ENCODE measurements at regions of chr15 and their contacts with region 1.

Region 1: DNA sequence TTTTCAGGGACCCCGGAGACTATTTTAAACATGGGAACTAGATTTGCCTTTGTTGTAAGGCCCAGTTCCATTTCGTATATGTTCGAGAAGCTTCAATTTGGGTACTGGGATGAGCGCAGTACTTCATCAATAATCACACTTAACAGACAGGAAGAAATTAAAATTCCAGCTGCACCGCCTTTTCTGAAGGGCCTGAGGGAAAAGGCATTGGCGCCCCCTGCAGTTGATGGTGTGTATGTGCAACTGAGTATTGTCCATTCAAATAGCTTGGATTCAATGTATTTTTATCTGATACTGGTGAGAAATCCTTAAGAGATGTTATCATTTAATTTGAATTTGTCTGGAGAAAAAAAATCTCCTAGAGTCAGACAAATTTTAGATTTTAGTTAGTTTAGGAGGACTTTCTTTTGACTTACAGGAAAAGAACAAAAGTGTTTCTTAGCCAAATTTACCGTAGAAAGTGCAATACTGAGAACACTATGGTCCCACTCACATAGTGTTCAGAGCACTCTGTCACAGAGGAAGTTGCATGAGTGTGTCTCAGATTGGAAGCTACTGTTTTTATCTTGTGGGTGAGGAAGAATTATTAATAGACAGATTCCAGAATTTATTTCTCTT is 5.4 kb upstream of the ALDH1A2 start:
- DNase-seq: no peak
- H3K4me3 ChIP-seq: no peak overlapping the region
- H3K27ac ChIP-seq: no peak overlapping the region
- H3K27me3 ChIP-seq: peaks cover 16% of the 10 kb centered on the region
- CTCF ChIP-seq: peak; percentile 86

Region 2: GRCh38 chr15:57561041-57561711 is 509.7 kb before region 1 on chr15:
- CTCF ChIA-PET with region 1: interaction called, 13 read pairs
- POLR2A ChIA-PET with region 1: no interaction called
- DNase-seq: peak; percentile 26
- H3K4me3 ChIP-seq: no peak overlapping the region
- H3K27ac ChIP-seq: no peak overlapping the region
- H3K27me3 ChIP-seq: peaks cover 12% of the 10 kb centered on the region
- CTCF ChIP-seq: peak; percentile 94

Region 3: DNA sequence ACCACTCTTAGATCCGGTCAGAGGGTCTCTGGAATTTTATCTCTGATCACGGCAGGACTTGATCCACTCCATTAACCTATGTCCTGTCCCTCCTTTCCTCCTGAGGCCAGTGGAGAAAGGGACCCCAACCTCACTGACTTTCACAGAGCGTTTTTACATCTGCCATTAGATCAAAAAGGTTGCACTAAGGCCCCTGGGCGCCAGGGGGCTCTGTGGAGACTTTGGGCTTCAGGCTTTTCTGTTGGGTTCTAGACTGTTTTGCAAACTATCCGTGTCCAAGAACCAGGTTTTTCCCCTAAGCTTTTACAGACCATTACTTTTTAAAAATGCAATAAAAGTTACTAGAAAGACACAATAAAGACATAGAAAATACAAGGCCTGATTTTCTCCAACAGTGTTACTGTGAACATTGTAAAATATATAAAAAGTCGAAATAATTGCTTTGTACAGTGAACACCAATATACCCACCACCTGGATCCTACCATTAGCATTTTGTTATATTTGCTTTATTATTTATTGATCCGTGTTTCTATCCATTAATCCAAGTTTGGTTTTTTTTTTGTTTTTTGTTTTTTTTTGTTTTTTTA is 204.7 kb before region 1 on chr15:
- CTCF ChIA-PET with region 1: interaction called, 30 read pairs
- POLR2A ChIA-PET with region 1: no interaction called
- DNase-seq: no peak
- H3K4me3 ChIP-seq: no peak overlapping the region
- H3K27ac ChIP-seq: no peak overlapping the region
- H3K27me3 ChIP-seq: no peaks in the 10 kb centered on the region
- CTCF ChIP-seq: peak; percentile 81

Region 4: GRCh38 chr15:58043192-58043903 is 27.6 kb before region 1 on chr15:
- CTCF ChIA-PET with region 1: interaction called, 24 read pairs
- POLR2A ChIA-PET with region 1: no interaction called
- DNase-seq: peak; percentile 4
- H3K4me3 ChIP-seq: no peak overlapping the region
- H3K27ac ChIP-seq: no peak overlapping the region
- H3K27me3 ChIP-seq: peaks cover 3% of the 10 kb centered on the region
- CTCF ChIP-seq: peak; percentile 82

Region 5: DNA sequence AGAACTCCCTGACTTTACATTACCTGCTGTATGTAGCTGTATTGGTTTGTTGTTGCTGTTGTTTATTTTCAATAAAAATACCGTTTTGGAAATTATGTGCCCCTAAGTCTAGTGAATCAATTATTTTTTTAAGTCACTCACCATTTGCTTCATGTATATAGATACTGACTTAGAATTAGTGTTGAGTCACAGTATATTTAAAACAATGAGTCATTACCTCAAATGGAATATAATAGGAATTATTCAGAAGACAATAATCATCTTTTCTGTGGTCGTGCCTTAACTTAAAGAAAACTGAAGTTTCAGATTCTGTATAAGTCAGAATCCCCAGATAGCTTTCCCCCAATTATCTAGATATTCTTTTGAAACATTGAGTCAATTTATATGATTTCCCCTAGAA is 15.6 kb after region 1 on chr15:
- CTCF ChIA-PET with region 1: interaction called, 22 read pairs
- POLR2A ChIA-PET with region 1: no interaction called
- DNase-seq: no peak
- H3K4me3 ChIP-seq: no peak overlapping the region
- H3K27ac ChIP-seq: no peak overlapping the region
- H3K27me3 ChIP-seq: no peaks in the 10 kb centered on the region
- CTCF ChIP-seq: no peak

Measured in AG04450 (cell line).